Activated B cell treated with CpG ODN at 0.5 μM for 24 hours (primary cell): ENCODE measurements at regions of chr13 and their contacts with region 1.

Region 1: DNA sequence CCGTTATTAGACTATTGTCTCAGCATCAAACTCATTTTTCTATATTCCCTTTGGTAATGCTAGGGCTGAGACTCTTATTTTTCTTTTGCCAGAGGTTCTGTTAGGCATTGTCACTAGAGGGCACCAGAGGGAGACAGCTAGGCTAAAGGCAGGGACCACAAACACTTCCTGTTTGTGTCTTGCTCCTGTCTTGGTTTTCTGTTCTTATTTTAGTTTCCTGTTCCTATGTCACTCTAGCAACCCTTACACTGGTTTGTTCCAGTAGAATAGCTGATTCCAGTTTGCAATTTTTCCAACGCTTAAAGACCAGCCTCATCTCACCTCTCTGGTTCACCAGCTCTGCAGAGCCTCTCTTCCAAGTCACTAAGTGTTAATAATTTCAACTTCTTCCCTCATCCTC is 772.0 kb downstream of the DIAPH3 start:
- DNase-seq: no peak
- ATAC-seq: peak; percentile 64
- H3K4me3 Mint-ChIP-seq: no peak overlapping the region
- H3K27ac Mint-ChIP-seq: no peak overlapping the region
- H3K4me1 Mint-ChIP-seq: no peaks in the 10 kb centered on the region
- H3K27me3 Mint-ChIP-seq: no peaks in the 10 kb centered on the region
- CTCF ChIP-seq: no peak

Region 2: GRCh38 chr13:59437902-59438301 is 46.2 kb after region 1 on chr13:
- CTCF ChIA-PET with region 1: no interaction called
- POLR2A ChIA-PET with region 1: no interaction called
- intact Hi-C with region 1: loop called (anchors 1 kb)
- DNase-seq: no peak
- ATAC-seq: no peak
- H3K4me3 Mint-ChIP-seq: no peak overlapping the region
- H3K27ac Mint-ChIP-seq: no peak overlapping the region
- H3K4me1 Mint-ChIP-seq: no peaks in the 10 kb centered on the region
- H3K27me3 Mint-ChIP-seq: no peaks in the 10 kb centered on the region
- CTCF ChIP-seq: no peak

Region 3: DNA sequence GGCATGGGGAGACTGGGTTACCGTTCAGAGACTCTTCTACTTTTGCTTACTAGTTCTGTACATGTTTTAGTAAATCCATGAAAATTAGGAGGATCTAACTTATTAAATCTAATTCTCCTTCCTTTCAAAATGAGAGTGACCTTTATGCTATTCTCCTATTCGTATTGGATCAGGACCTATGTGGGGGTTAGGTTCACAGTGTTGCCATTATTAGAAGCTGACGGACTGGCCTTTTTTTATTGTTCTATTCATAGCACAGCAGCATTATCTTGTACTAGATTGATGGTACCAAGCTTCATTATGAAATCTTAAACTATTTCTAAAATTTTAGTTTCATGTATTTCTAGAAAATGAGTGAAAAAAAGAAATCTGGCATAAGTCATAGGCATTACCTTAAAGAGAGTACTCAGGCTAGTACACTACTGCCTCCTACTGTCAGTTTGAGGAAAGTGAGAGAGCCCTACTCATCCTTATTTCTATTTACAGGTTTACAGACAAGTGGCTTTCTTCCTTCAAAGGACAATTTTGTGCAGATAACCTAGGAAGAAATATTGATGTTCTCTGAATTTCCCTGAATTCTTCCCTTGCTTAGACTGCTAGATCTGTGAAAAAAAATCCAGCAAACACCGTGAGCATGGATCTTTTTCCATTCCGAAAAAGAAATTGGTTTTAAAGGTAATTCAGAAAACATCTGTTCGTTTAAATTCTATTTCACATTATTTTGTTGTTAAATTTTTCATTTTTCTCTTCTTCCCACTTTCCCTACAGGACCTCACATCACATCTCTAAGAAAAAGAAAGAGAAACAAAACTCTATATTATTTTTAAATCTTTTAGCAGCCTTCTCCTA is 286.5 kb after region 1 on chr13:
- CTCF ChIA-PET with region 1: interaction called, 6 read pairs
- POLR2A ChIA-PET with region 1: no interaction called
- intact Hi-C with region 1: loop called (anchors 1 kb)
- DNase-seq: no peak
- ATAC-seq: no peak
- H3K4me3 Mint-ChIP-seq: no peak overlapping the region
- H3K27ac Mint-ChIP-seq: no peak overlapping the region
- H3K4me1 Mint-ChIP-seq: peaks cover under 1% of the 10 kb centered on the region
- H3K27me3 Mint-ChIP-seq: no peaks in the 10 kb centered on the region
- CTCF ChIP-seq: no peak

Region 4: GRCh38 chr13:59771272-59771671 is 379.6 kb after region 1 on chr13:
- CTCF ChIA-PET with region 1: interaction called, 13 read pairs
- POLR2A ChIA-PET with region 1: no interaction called
- intact Hi-C with region 1: no loop called
- DNase-seq: no peak
- ATAC-seq: no peak
- H3K4me3 Mint-ChIP-seq: no peak overlapping the region
- H3K27ac Mint-ChIP-seq: no peak overlapping the region
- H3K4me1 Mint-ChIP-seq: no peaks in the 10 kb centered on the region
- H3K27me3 Mint-ChIP-seq: no peaks in the 10 kb centered on the region
- CTCF ChIP-seq: no peak